Head of caudate nucleus (tissue), 42 donors: ENCODE measurements at regions of chrX and their contacts with region 1.

Region 1: GRCh38 chrX:118807151-118808017 is 16.2 kb upstream of the ZCCHC12 start:
- DNase-seq: peak in 40 of 42 donors; percentile 12 to 78 (median 52)

Region 2: GRCh38 chrX:118603981-118604380 is 203.4 kb before region 1 on chrX:
- intact Hi-C with region 1: loop called (anchors 10 kb)
- DNase-seq: peak in 39 of 42 donors; percentile 4 to 78 (median 47)